Sigmoid colon (tissue), 7 donors: ENCODE measurements at regions of chr17 and their contacts with region 1.

Region 1: DNA sequence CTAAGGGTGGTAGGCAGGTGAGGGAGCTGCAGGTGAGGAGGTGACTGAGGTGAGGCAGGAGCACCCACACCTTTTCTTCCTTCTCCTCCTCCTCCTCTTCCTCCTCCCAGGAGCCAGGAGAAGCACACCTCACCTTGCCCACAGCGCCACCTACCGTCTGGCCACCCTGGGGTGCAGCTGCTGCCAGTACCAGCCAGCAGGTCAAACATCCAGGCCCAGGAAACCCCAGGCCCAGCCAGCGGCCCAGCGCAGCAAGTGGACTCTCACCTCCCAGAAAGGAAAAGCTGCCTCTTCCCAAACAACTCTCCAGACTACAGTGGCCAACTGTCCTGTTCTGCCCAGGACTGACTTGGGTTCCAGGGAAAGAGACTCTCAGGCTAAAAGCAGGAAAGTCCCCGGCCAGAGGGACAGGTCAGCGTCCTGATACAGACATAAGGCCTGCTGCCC is 22.7 kb downstream of the PEMT start:
- DNase-seq: no peak
- H3K4me3 ChIP-seq: no peak overlapping the region
- H3K27ac ChIP-seq: no peak overlapping the region
- H3K4me1 ChIP-seq: peaks cover 0 to 36% (median 27%) of the 10 kb centered on the region in 4 donors
- H3K27me3 ChIP-seq: no peaks in the 10 kb centered on the region
- CTCF ChIP-seq: peak; percentile 17 to 61 (median 53)
- EP300 ChIP-seq: no peak
- POLR2A ChIP-seq: no peak

Region 2: GRCh38 chr17:17356149-17356930 is 212.4 kb before region 1 on chr17:
- intact Hi-C with region 1: loop called (anchors 2 kb)
- DNase-seq: peak; percentile 81
- H3K4me3 ChIP-seq: no peak overlapping the region
- H3K27ac ChIP-seq: no peak overlapping the region
- H3K4me1 ChIP-seq: peaks cover 0 to 7% (median 4%) of the 10 kb centered on the region in 4 donors
- H3K27me3 ChIP-seq: peaks cover 0 to 13% (median 7%) of the 10 kb centered on the region in 3 donors
- CTCF ChIP-seq: peak; percentile 89 to 99 (median 98)
- EP300 ChIP-seq: no peak
- POLR2A ChIP-seq: no peak

Region 3: GRCh38 chr17:17511881-17512858 is 56.6 kb before region 1 on chr17:
- intact Hi-C with region 1: loop called (anchors 5 kb)
- DNase-seq: no peak
- H3K4me3 ChIP-seq: no peak overlapping the region
- H3K27ac ChIP-seq: no peak overlapping the region
- H3K4me1 ChIP-seq: no peaks in the 10 kb centered on the region
- H3K27me3 ChIP-seq: no peaks in the 10 kb centered on the region
- CTCF ChIP-seq: no peak
- EP300 ChIP-seq: no peak
- POLR2A ChIP-seq: no peak

Region 4: DNA sequence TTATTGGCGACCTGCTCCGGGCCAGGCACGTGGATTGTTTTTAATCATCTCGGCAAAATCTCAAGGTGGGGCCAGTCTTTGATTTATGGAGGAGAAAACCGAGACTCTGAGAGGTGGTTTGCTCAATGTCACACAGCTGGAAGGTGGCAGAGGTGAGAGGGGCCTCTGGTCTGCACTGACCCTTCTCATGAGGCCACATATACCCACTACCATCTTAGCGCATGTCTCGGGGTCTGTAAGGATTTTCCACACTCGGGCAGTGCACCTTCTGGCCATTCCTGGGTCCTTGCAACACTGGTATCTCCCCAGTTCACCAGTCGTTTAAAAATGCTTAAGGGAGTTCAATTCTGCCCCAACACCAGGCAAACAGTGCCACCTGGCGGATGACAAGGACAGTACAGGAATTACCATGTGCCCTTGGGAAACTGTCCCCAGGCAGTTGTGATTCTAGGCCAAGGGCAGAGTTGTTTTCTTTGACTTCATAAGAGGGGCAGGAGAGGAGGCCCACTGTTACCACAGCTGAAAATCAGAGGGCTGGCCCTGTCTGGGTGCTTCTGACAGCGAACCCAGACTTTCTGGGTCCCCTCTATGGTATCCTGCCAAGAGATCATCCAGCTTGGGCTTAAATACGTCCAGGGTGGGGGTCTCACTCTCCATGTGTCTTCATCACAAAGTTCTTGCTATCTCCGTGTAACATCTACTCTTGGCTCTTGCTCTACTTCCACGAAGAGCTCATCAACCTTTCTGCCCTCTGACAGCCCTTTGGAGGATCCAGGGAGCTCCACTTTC is 73.0 kb after region 1 on chr17:
- intact Hi-C with region 1: loop called (anchors 5 kb)
- DNase-seq: peak; percentile 87
- H3K4me3 ChIP-seq: no peak overlapping the region
- H3K27ac ChIP-seq: no peak overlapping the region
- H3K4me1 ChIP-seq: no peaks in the 10 kb centered on the region
- H3K27me3 ChIP-seq: no peaks in the 10 kb centered on the region
- CTCF ChIP-seq: peak; percentile 71 to 90 (median 88)
- EP300 ChIP-seq: no peak
- POLR2A ChIP-seq: no peak